Panc1 (cell line): ENCODE measurements at regions of chr2 and their contacts with region 1.

Region 1: DNA sequence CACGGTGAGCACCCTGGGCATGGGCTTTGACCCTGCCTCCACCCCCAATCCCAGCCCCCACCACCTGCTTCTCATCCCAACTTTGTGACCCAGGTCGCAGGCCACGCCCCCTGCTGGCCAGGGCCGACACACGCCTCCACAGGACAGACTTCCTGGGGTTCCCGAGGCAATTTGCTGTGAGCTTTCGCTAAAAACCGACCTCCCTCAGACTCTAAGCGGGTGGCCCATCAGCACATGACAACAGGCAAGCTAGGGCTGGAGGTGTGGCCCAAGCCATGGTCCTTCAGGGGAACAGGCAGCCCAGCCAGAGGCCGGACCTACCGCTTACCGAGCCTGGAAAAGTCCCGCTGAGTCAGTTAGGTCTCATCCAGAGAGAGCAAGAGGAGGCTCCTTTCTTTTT is 31.9 kb downstream of the C1QL2 start:
- DNase-seq: no peak
- ATAC-seq: peak; percentile 71
- H3K4me3 ChIP-seq: no peak overlapping the region
- H3K27ac ChIP-seq: no peak overlapping the region
- H3K4me1 ChIP-seq: no peaks in the 10 kb centered on the region
- H3K27me3 ChIP-seq: peaks cover 2% of the 10 kb centered on the region; the same call in 1 of the 2 replicates
- CTCF ChIP-seq: peak; percentile 85

Region 2: GRCh38 chr2:119112230-119112629 is 14.4 kb before region 1 on chr2:
- CTCF ChIA-PET with region 1: interaction called, 10 read pairs
- POLR2A ChIA-PET with region 1: no interaction called
- in situ Hi-C with region 1: no loop called
- intact Hi-C with region 1: no loop called
- DNase-seq: no peak
- ATAC-seq: no peak
- H3K4me3 ChIP-seq: no peak overlapping the region
- H3K27ac ChIP-seq: no peak overlapping the region
- H3K4me1 ChIP-seq: no peaks in the 10 kb centered on the region
- H3K27me3 ChIP-seq: peaks cover 3% of the 10 kb centered on the region
- CTCF ChIP-seq: no peak

Region 3: GRCh38 chr2:119290859-119291587 is 164.4 kb after region 1 on chr2:
- CTCF ChIA-PET with region 1: no interaction called
- POLR2A ChIA-PET with region 1: no interaction called
- in situ Hi-C with region 1: no loop called
- intact Hi-C with region 1: no loop called
- DNase-seq: peak; percentile 24
- ATAC-seq: peak; percentile 98
- H3K4me3 ChIP-seq: no peak overlapping the region
- H3K27ac ChIP-seq: no peak overlapping the region
- H3K4me1 ChIP-seq: peaks cover 3% of the 10 kb centered on the region; the same call in 1 of the 2 replicates
- H3K27me3 ChIP-seq: no peaks in the 10 kb centered on the region
- CTCF ChIP-seq: peak; percentile 91

Region 4: GRCh38 chr2:120239488-120240287 is 1113.0 kb after region 1 on chr2:
- CTCF ChIA-PET with region 1: no interaction called
- POLR2A ChIA-PET with region 1: no interaction called
- in situ Hi-C with region 1: no loop called
- intact Hi-C with region 1: no loop called
- DNase-seq: no peak
- ATAC-seq: peak; percentile 13; the same call in 1 of the 2 replicates
- H3K4me3 ChIP-seq: no peak overlapping the region
- H3K27ac ChIP-seq: no peak overlapping the region
- H3K4me1 ChIP-seq: peaks cover 23% of the 10 kb centered on the region
- H3K27me3 ChIP-seq: no peaks in the 10 kb centered on the region
- CTCF ChIP-seq: no peak